Activated CD8-positive, alpha-beta T cell treated with anti-CD3 and anti-CD28 coated beads for 36 hours (primary cell): ENCODE measurements at regions of chr19 and their contacts with region 1.

Region 1: GRCh38 chr19:14117668-14118164 is at the start of gene PRKACA:
- DNase-seq: peak; percentile 99
- ATAC-seq: peak; percentile 96
- H3K4me3 Mint-ChIP-seq: peak within 1 kb of the TSS; percentile 90
- H3K27ac Mint-ChIP-seq: peak within 1 kb of the TSS; percentile 83
- H3K4me1 Mint-ChIP-seq: peaks cover 44% of the 10 kb centered on the region
- H3K27me3 Mint-ChIP-seq: no peaks in the 10 kb centered on the region
- CTCF ChIP-seq: no peak
- total RNA-seq, gene PRKACA: 61.0 to 61.5 TPM

Region 2: DNA sequence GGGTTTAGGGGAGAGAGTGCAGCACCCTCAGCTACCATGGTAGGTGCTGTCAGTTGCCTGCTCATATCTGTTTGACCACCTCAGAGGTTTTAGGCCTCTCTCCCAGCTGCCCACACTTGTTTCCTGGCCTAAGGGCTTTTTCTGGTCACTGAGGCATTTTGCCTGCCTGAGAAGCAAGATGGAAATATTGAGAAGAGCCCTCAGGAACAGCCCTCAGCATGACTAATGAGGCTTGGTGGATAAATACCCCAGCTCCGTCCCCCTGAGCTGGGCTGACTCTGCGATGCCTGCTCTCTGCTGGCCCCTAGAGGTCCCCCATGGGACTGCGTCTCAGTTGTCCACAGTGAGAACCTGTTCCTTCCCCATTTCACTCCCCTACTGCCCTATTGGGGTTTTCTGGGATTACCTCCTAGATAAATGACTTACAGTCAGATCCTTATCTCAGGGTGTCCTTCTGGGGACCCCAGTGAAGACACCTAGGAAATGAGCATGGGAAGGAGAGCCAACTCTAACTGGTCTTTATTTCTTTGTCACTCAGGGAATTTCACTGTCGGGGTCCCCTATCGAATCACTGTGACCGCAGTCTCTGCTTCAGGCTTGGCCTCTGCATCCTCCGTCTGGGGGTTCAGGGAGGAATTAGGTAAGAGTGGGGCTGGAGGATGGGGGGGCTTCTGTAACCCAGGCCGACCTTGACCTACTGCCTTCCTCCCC is 69.1 kb before region 1 on chr19:
- CTCF ChIA-PET with region 1: no interaction called
- POLR2A ChIA-PET with region 1: no interaction called
- intact Hi-C with region 1: no loop called
- DNase-seq: peak; percentile 85
- ATAC-seq: peak; percentile 97
- H3K4me3 Mint-ChIP-seq: no peak overlapping the region
- H3K27ac Mint-ChIP-seq: no peak overlapping the region
- H3K4me1 Mint-ChIP-seq: peaks cover 13% of the 10 kb centered on the region
- H3K27me3 Mint-ChIP-seq: no peaks in the 10 kb centered on the region
- CTCF ChIP-seq: peak; percentile 96

Region 3: DNA sequence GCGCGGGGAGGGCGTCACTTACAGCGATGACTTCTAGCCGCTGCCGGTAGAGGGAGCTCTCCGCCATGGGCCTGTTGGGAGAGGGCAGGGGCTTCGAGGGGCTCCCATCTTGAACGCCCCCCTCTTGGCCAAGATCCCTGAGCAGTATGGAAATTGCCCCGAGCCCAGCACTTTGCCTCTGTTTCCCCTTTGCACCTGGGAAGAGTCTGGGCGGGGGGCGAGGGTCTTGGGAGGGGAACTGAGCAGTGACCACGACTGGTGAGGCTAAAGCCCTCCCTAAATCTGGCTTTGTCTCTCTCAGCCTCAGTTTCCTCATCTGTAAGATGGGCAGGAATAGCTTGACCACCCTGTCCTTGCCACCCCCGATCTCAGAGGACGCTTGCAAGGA is 58.6 kb before region 1 on chr19:
- CTCF ChIA-PET with region 1: interaction called, 13 read pairs
- POLR2A ChIA-PET with region 1: no interaction called
- intact Hi-C with region 1: no loop called
- DNase-seq: peak; percentile 77
- ATAC-seq: peak; percentile 77
- H3K4me3 Mint-ChIP-seq: no peak overlapping the region
- H3K27ac Mint-ChIP-seq: no peak overlapping the region
- H3K4me1 Mint-ChIP-seq: peaks cover 16% of the 10 kb centered on the region
- H3K27me3 Mint-ChIP-seq: peaks cover 37% of the 10 kb centered on the region
- CTCF ChIP-seq: peak; percentile 91

Region 4: DNA sequence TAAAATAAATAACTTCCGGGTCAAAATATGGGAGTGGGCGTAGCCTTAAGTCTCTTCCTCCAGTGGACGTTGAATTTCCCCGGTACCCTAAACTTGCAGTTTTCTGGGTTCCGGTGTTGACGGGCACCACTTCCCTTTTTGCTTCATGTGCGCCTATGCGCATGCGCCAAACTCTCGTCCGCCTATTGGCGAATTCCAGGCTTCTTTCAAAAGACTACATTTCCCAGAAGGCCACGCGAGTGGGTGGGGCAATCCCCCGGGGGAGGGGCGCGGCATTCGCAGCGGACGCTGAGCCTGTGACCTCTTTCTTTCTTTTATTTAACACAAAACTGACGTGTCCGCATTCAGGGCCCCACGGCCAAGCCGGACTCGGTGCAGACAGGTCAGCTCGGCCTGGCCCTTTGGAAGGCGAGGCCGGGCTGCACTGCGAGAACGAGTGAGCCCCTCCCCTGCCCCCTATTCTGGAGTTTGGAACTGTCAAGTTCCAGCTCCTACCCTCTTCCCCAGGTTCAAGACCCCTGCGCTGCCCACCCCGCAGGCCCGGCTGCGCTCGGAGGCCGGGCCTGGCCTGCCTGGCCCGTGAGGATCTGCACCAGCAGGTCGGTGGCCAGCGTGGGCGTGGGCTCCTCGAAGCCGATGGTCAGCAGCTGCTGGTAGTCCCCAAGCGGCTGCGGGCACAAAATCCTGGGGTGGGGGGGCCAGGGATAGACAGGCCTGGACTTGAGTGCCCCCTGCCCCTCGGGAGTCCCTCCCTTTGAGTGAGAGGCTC is 36.2 kb before region 1 on chr19:
- CTCF ChIA-PET with region 1: interaction called, 20 read pairs
- POLR2A ChIA-PET with region 1: interaction called, 3 read pairs
- intact Hi-C with region 1: no loop called
- DNase-seq: peak; percentile 99
- ATAC-seq: peak; percentile 94
- H3K4me3 Mint-ChIP-seq: peak overlapping the region; percentile 96
- H3K27ac Mint-ChIP-seq: peak overlapping the region; percentile 93
- H3K4me1 Mint-ChIP-seq: peaks cover 12% of the 10 kb centered on the region
- H3K27me3 Mint-ChIP-seq: no peaks in the 10 kb centered on the region
- CTCF ChIP-seq: no peak

Region 5: DNA sequence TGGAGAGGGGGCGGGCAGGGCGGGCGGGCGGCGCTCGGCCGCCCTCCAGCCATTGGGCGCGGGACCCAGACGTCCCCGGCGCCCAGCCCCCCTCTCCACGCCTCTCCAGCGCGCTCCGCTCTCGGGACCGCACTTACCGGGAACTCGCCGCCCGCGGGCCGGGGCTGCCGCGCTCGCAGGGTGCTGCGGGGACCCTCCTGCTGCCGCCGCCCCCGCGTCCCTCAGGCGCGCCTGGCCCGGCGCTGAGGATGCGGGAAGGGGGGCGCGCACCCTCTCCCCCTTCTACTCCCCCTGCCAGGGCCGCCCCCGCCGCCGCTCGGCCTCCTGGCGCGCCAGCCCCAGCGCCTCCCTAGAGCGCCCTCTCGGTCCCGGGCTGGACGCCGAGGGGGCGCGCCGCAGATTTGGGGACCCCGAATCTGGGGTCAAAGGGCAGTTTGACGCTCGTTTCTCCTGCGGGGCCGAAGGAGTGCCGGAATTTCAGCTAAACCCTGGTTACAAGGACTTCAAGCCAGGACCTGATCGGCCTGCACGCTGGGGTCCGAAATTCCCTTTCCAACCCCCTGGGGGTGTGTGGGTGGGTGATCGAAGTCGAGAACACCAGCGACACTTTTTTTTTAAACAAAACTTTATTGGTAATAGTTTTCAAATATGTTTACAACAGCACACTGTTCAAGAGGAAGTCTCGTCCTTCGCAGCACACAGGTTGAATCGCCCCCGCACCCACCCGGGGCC is 26.5 kb before region 1 on chr19:
- CTCF ChIA-PET with region 1: interaction called, 29 read pairs
- POLR2A ChIA-PET with region 1: interaction called, 6 read pairs
- intact Hi-C with region 1: no loop called
- DNase-seq: peak; percentile 79
- ATAC-seq: peak; percentile 72
- H3K4me3 Mint-ChIP-seq: peak overlapping the region; percentile 82
- H3K27ac Mint-ChIP-seq: peak overlapping the region; percentile 97
- H3K4me1 Mint-ChIP-seq: peaks cover 16% of the 10 kb centered on the region
- H3K27me3 Mint-ChIP-seq: no peaks in the 10 kb centered on the region
- CTCF ChIP-seq: no peak

Region 6: GRCh38 chr19:14096272-14096992 is 21.3 kb before region 1 on chr19:
- CTCF ChIA-PET with region 1: interaction called, 29 read pairs
- POLR2A ChIA-PET with region 1: interaction called, 6 read pairs
- intact Hi-C with region 1: no loop called
- DNase-seq: no peak
- ATAC-seq: no peak
- H3K4me3 Mint-ChIP-seq: no peak overlapping the region
- H3K27ac Mint-ChIP-seq: no peak overlapping the region
- H3K4me1 Mint-ChIP-seq: peaks cover 10% of the 10 kb centered on the region
- H3K27me3 Mint-ChIP-seq: no peaks in the 10 kb centered on the region
- CTCF ChIP-seq: no peak

Region 7: GRCh38 chr19:14103310-14103709 is 14.4 kb before region 1 on chr19:
- CTCF ChIA-PET with region 1: interaction called, 14 read pairs
- POLR2A ChIA-PET with region 1: no interaction called
- intact Hi-C with region 1: no loop called
- DNase-seq: no peak
- ATAC-seq: peak; percentile 60
- H3K4me3 Mint-ChIP-seq: no peak overlapping the region
- H3K27ac Mint-ChIP-seq: no peak overlapping the region
- H3K4me1 Mint-ChIP-seq: no peaks in the 10 kb centered on the region
- H3K27me3 Mint-ChIP-seq: no peaks in the 10 kb centered on the region
- CTCF ChIP-seq: no peak

Region 8: GRCh38 chr19:14136509-14137281 is 19.0 kb after region 1 on chr19 and contains the start of gene ASF1B:
- CTCF ChIA-PET with region 1: interaction called, 44 read pairs
- POLR2A ChIA-PET with region 1: interaction called, 8 read pairs
- intact Hi-C with region 1: no loop called
- DNase-seq: peak; percentile 99
- ATAC-seq: peak; percentile 83
- H3K4me3 Mint-ChIP-seq: peak within 1 kb of the TSS; percentile 95
- H3K27ac Mint-ChIP-seq: peak within 1 kb of the TSS; percentile 98
- H3K4me1 Mint-ChIP-seq: peaks cover 36% of the 10 kb centered on the region
- H3K27me3 Mint-ChIP-seq: no peaks in the 10 kb centered on the region
- CTCF ChIP-seq: peak; percentile 67
- total RNA-seq, gene ASF1B: 53.5 to 55.3 TPM

Region 9: DNA sequence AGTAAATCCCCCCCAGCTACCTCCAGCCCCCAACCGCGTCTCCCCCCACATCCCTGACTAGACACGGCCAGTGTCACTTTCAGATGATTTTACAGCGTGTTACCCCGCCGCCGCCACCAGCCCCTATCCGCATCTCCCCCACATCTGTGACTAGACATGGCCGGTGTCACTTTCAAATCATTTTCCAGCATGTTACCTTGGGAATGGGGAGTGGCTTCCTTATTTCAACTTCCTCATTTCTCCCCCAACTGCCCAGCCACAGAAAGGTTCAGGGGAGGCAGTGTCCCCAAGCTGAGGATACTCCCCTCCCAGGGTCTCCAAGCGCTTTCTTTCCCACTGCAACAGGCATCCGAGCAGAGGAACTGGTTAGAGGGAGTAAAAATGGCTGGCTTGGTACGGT is 69.8 kb after region 1 on chr19:
- CTCF ChIA-PET with region 1: no interaction called
- POLR2A ChIA-PET with region 1: no interaction called
- intact Hi-C with region 1: no loop called
- DNase-seq: no peak
- ATAC-seq: no peak
- H3K4me3 Mint-ChIP-seq: no peak overlapping the region
- H3K27ac Mint-ChIP-seq: no peak overlapping the region
- H3K4me1 Mint-ChIP-seq: peaks cover 5% of the 10 kb centered on the region
- H3K27me3 Mint-ChIP-seq: no peaks in the 10 kb centered on the region
- CTCF ChIP-seq: no peak

Region 10: GRCh38 chr19:14686411-14686810 is 568.7 kb after region 1 on chr19:
- CTCF ChIA-PET with region 1: no interaction called
- POLR2A ChIA-PET with region 1: no interaction called
- intact Hi-C with region 1: no loop called
- DNase-seq: peak; percentile 49
- ATAC-seq: no peak
- H3K4me3 Mint-ChIP-seq: no peak overlapping the region
- H3K27ac Mint-ChIP-seq: no peak overlapping the region
- H3K4me1 Mint-ChIP-seq: peaks cover 12% of the 10 kb centered on the region
- H3K27me3 Mint-ChIP-seq: peaks cover 3% of the 10 kb centered on the region
- CTCF ChIP-seq: peak; percentile 80